ENCODE measurements at regions of chr9 and their contacts with region 1.

Region 1: GRCh38 chr9:17799383-17799782 is 220.5 kb downstream of the SH3GL2 start:
- DNase-seq: no peak
- H3K4me3 ChIP-seq: no peak overlapping the region
- H3K27ac ChIP-seq: no peak overlapping the region
- H3K4me1 ChIP-seq: no peaks in the 10 kb centered on the region
- H3K27me3 ChIP-seq: no peaks in the 10 kb centered on the region
- CTCF ChIP-seq: no peak

Region 2: DNA sequence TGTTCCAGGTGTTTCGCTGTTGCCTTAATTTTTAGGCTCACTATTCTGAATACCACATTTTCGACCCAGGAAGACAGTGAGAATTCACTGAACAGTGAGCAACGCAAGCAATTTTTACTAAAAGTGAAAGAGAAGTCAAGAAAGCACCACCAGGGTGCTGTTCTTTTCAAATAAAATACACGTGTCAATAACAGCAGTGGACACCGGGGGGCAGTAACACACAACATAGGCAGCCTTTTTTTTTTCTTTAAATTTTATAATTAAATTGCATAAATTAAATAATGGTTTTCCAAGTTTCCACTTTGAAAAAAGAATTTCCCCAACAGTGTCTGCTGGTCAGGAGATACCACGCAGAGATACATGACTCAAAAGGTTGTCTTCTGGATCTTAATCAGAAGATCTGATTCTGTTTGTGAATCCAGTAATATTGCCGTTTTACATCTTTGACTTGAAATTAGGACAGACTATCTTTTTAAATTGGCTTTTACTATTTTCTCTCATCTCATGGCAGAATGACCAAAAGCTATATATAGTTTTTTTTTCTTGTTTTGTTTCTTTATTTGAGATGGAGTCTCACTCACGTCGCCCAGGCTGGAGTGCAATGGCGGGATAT is 267.6 kb before region 1 on chr9:
- intact Hi-C with region 1: loop called (anchors 2 kb)
- DNase-seq: peak; percentile 50
- H3K4me3 ChIP-seq: no peak overlapping the region
- H3K27ac ChIP-seq: no peak overlapping the region
- H3K4me1 ChIP-seq: no peaks in the 10 kb centered on the region
- H3K27me3 ChIP-seq: no peaks in the 10 kb centered on the region
- CTCF ChIP-seq: peak; percentile 54